Stomach (tissue), 19 donors: ENCODE measurements at regions of chr2 and their contacts with region 1.

Region 1: GRCh38 chr2:85813982-85814801 is 60.4 kb downstream of the ATOH8 start:
- DNase-seq: peak; percentile 96
- H3K4me3 ChIP-seq: no peak overlapping the region
- H3K27ac ChIP-seq: no peak overlapping the region
- H3K4me1 ChIP-seq: peaks cover 14 to 32% (median 21%) of the 10 kb centered on the region in 4 donors
- H3K27me3 ChIP-seq: no peaks in the 10 kb centered on the region
- CTCF ChIP-seq: peak in 6 of 7 experiments; percentile 67 to 96 (median 92)
- EP300 ChIP-seq: no peak
- POLR2A ChIP-seq: no peak

Region 2: DNA sequence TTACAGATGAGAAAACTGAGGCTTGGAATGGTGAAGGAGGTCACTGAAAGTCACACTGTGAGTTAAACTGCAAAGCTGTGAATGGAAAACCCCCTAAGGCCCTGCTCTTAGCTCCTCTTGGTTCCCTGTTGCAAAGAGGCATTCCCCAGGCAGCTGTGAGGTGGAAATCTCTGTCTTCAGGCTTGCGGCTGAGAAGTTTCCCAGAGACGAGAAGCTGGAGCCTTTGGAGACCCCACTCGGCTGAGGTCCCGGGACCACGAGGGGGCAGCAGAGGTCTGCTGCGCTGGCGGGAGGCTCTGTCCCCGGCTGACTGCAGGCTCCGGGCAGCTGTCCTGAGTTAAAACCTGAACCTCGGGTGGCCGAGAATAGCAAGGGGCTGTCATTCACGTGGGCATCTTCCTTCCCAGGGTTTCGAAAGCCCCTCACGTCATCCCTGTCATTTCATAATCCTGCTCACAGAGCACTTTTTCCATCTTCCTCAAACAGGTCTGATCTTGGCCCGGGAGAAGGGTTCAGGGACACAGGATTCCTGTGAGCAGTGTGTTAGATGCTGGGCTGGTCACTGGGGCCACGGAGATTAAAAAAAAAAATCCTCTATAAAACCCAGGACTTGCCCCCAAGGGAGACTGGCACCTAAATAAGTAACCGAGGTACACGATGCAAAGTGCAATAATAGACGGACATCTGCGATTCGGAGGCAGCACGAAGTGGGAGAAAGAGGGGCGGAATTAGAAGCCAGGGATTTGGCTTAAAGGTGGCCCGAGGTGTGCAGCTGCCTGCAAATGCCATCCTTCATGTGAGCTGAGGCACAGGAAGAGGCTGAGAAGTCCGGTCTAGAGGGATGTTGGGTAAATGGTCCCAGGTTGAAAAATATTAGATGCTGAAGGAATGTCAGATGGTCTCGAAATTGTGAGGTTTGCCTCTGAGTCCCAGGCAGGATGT is 85.0 kb before region 1 on chr2:
- intact Hi-C with region 1: loop called (anchors 5 kb)
- DNase-seq: peak; percentile 92 to 94
- H3K4me3 ChIP-seq: no peak overlapping the region
- H3K27ac ChIP-seq: peak overlapping the region in 1 of 5 donors; percentile 44
- H3K4me1 ChIP-seq: peaks cover 0 to 13% (median 11%) of the 10 kb centered on the region in 4 donors
- H3K27me3 ChIP-seq: no peaks in the 10 kb centered on the region
- CTCF ChIP-seq: peak in 5 of 7 experiments; percentile 83 to 96 (median 92)
- EP300 ChIP-seq: no peak
- POLR2A ChIP-seq: no peak

Region 3: GRCh38 chr2:85750587-85751575 is 63.3 kb before region 1 on chr2:
- intact Hi-C with region 1: loop called (anchors 10 kb)
- DNase-seq: peak; percentile 81 to 87
- H3K4me3 ChIP-seq: no peak overlapping the region
- H3K27ac ChIP-seq: peak overlapping the region in 2 of 5 donors; percentile 26 to 36
- H3K4me1 ChIP-seq: peaks cover 39 to 80% (median 69%) of the 10 kb centered on the region in 4 donors
- H3K27me3 ChIP-seq: peaks cover 0 to 47% (median 26%) of the 10 kb centered on the region in 3 donors
- CTCF ChIP-seq: peak in 5 of 7 experiments; percentile 67 to 88 (median 76)
- EP300 ChIP-seq: no peak
- POLR2A ChIP-seq: no peak